PC-9 (cell line): ENCODE measurements at regions of chr7 and their contacts with region 1.

Region 1: DNA sequence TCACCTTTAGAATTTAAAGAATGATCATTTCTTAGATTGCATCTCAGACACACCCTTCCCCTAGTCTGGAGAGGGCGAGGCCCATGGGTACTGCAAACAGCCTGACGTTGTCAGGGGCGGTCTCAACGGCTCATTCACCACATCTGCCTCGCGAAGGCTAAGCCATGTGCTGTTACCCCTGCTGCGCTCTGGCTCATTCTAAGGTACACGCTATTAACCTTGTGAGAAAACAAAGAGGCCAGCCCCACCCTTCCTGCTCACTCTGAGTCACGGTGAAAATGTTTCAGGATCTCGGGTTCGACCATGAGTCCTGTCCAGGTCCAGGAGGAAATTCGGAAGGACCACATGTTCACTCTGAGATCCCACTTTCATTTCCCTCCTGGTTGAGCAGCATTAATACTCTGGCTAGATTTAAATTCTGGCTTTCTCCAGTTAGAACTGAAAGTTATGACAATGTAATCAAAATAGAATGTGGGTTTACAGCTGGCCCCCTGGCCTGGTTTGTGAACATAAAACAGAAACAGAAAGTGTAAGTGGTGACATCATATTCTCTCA is 55.2 kb downstream of the EGFR start:
- DNase-seq: peak; percentile 94 to 100
- H3K4me3 ChIP-seq: peak overlapping the region; percentile 32; the same call in 1 of the 2 replicates
- H3K27ac ChIP-seq: peak overlapping the region; percentile 86
- H3K4me1 ChIP-seq: peaks cover 45% of the 10 kb centered on the region
- H3K27me3 ChIP-seq: no peaks in the 10 kb centered on the region
- CTCF ChIP-seq: no peak

Region 2: DNA sequence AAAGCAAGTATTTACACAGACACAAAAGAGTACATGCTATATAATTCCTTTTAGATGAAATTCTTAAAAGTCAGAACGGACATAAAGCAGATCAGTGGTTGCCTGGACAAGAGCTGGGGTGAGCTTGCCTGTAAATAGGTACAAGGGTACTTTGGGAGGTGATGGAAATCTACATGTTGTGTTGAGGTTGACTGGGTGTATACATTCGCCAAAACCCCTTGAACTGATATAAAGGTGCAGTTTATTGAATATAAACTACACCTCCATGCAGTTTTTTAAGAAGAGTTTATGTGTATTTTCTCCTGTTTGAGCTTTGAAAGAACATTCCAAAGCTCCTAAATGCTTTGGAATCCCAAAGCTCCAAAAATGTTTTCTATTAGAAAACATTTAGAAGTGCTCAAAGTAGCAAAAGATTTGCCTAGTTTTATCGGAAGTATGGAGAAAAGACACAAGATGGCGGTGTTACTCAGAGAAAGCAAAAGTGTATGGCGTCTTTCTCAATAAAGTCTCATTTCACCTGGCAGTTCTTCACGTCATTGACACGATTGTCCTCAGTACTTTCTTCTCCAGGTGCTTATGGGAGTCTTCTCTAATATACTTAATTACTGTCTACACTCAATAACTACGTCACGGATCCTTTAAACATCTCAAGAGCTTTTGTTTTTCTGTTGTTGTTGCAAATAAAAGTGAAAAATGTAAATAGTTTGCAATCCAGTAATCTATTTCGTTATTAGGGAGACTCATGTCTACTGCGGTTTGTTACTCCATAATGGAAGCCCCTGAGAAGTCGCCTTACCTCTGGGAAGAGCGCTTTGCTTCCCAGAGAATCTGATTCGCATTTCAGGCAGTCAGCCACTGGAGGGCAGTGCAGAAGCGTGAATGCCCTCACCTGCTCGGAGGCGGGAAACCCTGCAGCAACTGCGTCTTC is 300.3 kb before region 1 on chr7:
- CTCF ChIA-PET with region 1: interaction called, 10 read pairs
- POLR2A ChIA-PET with region 1: no interaction called
- intact Hi-C with region 1: no loop called
- DNase-seq: peak; percentile 94
- H3K4me3 ChIP-seq: peak overlapping the region; percentile 58
- H3K27ac ChIP-seq: peak overlapping the region; percentile 67
- H3K4me1 ChIP-seq: peaks cover 20% of the 10 kb centered on the region
- H3K27me3 ChIP-seq: no peaks in the 10 kb centered on the region
- CTCF ChIP-seq: peak; percentile 100

Region 3: DNA sequence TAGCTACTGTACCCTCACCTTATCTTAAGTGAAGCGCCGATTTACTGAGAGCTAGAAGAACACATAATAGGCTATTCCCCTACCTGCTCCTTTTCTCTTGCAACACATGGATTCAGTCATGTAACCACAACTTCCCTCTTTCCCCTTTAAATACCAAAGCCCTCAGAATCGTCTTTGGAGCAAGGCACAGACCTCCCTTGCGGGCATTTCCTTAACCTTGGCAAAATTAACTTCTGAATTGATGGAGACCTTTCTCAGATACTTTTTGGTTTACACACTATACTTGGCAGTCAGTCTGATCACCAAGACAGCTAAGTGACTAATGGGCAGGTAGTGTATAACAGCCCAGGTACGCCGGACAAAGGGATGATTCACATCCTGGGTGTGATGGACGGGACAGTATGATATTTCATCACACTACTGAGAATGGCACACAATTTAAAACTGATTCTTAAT is 242.3 kb before region 1 on chr7:
- CTCF ChIA-PET with region 1: no interaction called
- POLR2A ChIA-PET with region 1: no interaction called
- intact Hi-C with region 1: loop called (anchors 2 kb)
- DNase-seq: peak; percentile 86 to 100
- H3K4me3 ChIP-seq: peak overlapping the region; percentile 39; the same call in 1 of the 2 replicates
- H3K27ac ChIP-seq: peak overlapping the region; percentile 94
- H3K4me1 ChIP-seq: peaks cover 45% of the 10 kb centered on the region
- H3K27me3 ChIP-seq: no peaks in the 10 kb centered on the region
- CTCF ChIP-seq: no peak; the same call in none of the 2 replicates

Region 4: GRCh38 chr7:54961391-54961790 is 112.6 kb before region 1 on chr7:
- CTCF ChIA-PET with region 1: no interaction called
- POLR2A ChIA-PET with region 1: interaction called, 23 read pairs
- intact Hi-C with region 1: no loop called
- DNase-seq: peak; percentile 88 to 98
- H3K4me3 ChIP-seq: peak overlapping the region; percentile 12; the same call in 1 of the 2 replicates
- H3K27ac ChIP-seq: peak overlapping the region; percentile 71
- H3K4me1 ChIP-seq: peaks cover 34% of the 10 kb centered on the region
- H3K27me3 ChIP-seq: no peaks in the 10 kb centered on the region
- CTCF ChIP-seq: no peak

Region 5: DNA sequence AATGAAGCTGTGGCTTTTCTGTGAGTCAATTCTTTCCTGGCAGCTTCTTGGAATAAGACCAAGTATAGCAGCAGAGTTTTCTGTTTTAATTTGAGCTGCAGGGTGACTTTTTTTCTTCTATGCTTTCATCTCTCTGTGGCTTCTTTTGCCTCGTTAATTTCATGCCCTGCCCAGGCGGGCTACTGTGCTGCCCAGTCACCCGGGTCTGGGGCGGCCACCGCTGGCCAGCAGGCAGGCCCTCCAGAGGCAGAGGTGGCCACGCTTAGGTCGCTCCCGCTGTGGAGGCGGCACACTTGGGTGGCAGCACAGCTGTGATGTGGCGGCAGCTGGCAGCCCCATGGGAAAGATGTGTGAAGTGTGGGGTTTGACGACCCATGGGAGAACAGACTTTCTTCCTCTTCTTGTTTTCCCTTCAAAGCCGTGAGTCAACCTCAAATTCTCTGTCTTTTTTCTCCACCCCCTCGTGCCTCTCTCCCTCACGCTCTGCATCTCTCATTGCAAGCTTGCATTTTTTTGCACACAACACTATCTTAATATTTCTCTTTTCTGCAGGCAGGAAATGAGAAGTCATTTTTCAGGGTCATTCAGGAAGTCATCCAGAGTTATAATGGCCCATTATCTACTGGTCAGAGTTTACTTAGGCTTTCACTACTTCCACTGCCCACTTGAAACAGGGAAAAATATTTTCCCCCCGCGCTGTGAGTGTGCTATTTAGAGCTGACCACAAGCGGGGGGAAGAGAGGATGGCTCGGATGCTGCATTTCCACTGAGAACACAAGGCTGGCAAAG is 12.6 kb after region 1 on chr7:
- CTCF ChIA-PET with region 1: interaction called, 3 read pairs
- POLR2A ChIA-PET with region 1: interaction called, 4 read pairs
- intact Hi-C with region 1: loop called (anchors 2 kb)
- DNase-seq: peak; percentile 65 to 87
- H3K4me3 ChIP-seq: no peak overlapping the region
- H3K27ac ChIP-seq: peak overlapping the region; percentile 25
- H3K4me1 ChIP-seq: peaks cover 19% of the 10 kb centered on the region
- H3K27me3 ChIP-seq: no peaks in the 10 kb centered on the region
- CTCF ChIP-seq: no peak

Region 6: DNA sequence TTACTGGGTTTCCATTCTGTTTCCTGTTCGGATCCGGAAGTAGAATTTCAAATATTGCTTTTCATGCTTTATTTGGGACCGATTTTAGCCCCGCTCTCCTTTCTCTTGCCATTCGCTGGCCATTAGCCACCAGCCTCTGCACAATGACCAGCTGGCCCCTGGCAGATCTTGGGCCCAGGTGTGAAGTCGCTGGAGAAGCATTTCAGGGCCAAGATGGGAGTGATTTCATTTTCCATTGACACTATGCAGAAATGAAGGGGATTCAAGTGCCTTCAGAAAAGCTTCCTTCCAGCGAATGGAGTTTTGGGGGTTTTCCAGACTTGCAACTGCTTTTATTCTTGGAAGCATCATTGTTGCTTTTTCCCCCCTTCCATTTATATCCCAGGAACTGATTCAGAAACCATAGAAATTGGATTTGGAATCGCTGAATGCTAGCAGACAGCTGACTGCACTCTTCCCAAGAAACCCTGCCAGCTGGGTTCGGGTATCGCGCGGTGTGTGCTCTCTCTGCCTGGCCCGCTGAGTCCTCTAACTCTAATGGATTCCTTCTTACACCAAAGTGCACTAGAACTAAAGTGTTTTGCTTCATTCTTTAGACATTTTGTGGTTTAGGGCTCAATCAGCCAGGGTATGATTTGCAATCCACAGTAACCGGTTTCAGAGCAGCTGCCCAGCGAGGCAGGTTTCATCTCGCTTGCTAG is 36.8 kb after region 1 on chr7:
- CTCF ChIA-PET with region 1: no interaction called
- POLR2A ChIA-PET with region 1: interaction called, 3 read pairs
- intact Hi-C with region 1: loop called (anchors 2 kb)
- DNase-seq: peak; percentile 68 to 71
- H3K4me3 ChIP-seq: no peak overlapping the region
- H3K27ac ChIP-seq: peak overlapping the region; percentile 2; the same call in 1 of the 2 replicates
- H3K4me1 ChIP-seq: peaks cover 50% of the 10 kb centered on the region
- H3K27me3 ChIP-seq: no peaks in the 10 kb centered on the region
- CTCF ChIP-seq: no peak

Region 7: GRCh38 chr7:55120481-55121198 is 46.6 kb after region 1 on chr7:
- CTCF ChIA-PET with region 1: interaction called, 6 read pairs
- POLR2A ChIA-PET with region 1: interaction called, 4 read pairs
- intact Hi-C with region 1: loop called (anchors 1 kb)
- DNase-seq: peak; percentile 71 to 98
- H3K4me3 ChIP-seq: peak overlapping the region; percentile 3; the same call in 1 of the 2 replicates
- H3K27ac ChIP-seq: peak overlapping the region; percentile 79
- H3K4me1 ChIP-seq: peaks cover 77% of the 10 kb centered on the region
- H3K27me3 ChIP-seq: no peaks in the 10 kb centered on the region
- CTCF ChIP-seq: no peak